ENCODE measurements at regions of chr7 and their contacts with region 1.

Region 1: GRCh38 chr7:51108134-51108533 is 208.5 kb downstream of the COBL start:
- DNase-seq: no peak

Region 2: DNA sequence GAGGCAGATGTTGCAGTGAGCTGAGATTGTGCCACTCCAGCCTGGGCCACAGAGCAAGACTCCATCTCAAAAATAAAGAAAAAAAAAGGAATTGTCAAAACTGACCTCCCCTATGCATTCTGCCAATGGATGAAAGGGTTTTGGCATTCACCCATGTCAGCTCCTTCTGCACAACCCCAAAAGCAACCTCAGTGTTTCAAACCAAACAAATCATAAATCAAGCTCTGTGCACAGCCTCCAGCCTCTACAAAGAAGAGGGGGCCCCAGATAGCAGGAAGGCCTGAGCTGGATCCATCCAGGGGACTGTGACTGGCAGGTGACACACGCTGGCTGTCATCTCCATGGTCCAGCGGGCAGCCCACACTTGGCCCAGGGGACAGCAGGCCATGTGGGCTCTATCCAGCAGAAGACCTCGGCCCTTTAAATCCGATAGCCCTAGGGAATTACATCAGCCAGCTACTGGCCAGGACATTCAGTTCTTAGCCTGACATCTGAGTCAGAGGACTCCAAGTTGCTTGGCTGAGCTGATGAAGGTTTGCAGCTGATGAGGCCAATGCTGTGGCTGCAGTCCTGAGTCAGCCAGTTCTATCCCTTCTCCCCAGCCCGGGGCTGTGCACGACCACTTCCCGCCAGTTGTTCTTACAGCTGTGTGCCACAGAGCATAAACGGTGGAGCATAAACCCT is 606.0 kb before region 1 on chr7:
- intact Hi-C with region 1: no loop called
- DNase-seq: peak; percentile 88

Region 3: GRCh38 chr7:51175992-51176388 is 67.9 kb after region 1 on chr7:
- intact Hi-C with region 1: loop called in 1 of 2 experiments (anchors 2 kb)
- DNase-seq: no peak

Measured in posterior vena cava (tissue), 2 donors.